GM12878 (cell line): ENCODE measurements at regions of chr17 and their contacts with region 1.

Region 1: GRCh38 chr17:1628856-1629646 is 417 bp upstream of the SLC43A2 start:
- DNase-seq: no peak
- ATAC-seq: peak; percentile 84
- H3K4me3 ChIP-seq: peak overlapping the region; percentile 88
- H3K27ac ChIP-seq: peak overlapping the region; percentile 87
- H3K4me1 ChIP-seq: peaks cover 42% of the 10 kb centered on the region
- H3K27me3 ChIP-seq: no peaks in the 10 kb centered on the region
- CTCF ChIP-seq: peak in 2 of 3 experiments; percentile 30 to 51; a peak in 4 of 6 replicates
- EP300 ChIP-seq: no peak
- POLR2A ChIP-seq: peak; percentile 70
- RAD21 ChIP-seq: peak; percentile 40; the same call in 1 of the 2 replicates

Region 2: GRCh38 chr17:1532836-1533602 is 96.0 kb before region 1 on chr17:
- CTCF ChIA-PET with region 1: interaction called, 14 read pairs
- POLR2A ChIA-PET with region 1: interaction called, 6 read pairs
- RAD21 ChIA-PET with region 1: interaction called, 4 read pairs
- SMC1A ChIA-PET with region 1: interaction called, 4 read pairs
- in situ Hi-C with region 1: no loop called
- intact Hi-C with region 1: no loop called
- DNase-seq: no peak
- ATAC-seq: peak; percentile 86
- H3K4me3 ChIP-seq: no peak overlapping the region
- H3K27ac ChIP-seq: no peak overlapping the region
- H3K4me1 ChIP-seq: no peaks in the 10 kb centered on the region
- H3K27me3 ChIP-seq: no peaks in the 10 kb centered on the region
- CTCF ChIP-seq: peak; percentile 45 to 63 (median 57); a peak in 5 of 6 replicates
- EP300 ChIP-seq: no peak
- POLR2A ChIP-seq: no peak
- RAD21 ChIP-seq: peak; percentile 50

Region 3: DNA sequence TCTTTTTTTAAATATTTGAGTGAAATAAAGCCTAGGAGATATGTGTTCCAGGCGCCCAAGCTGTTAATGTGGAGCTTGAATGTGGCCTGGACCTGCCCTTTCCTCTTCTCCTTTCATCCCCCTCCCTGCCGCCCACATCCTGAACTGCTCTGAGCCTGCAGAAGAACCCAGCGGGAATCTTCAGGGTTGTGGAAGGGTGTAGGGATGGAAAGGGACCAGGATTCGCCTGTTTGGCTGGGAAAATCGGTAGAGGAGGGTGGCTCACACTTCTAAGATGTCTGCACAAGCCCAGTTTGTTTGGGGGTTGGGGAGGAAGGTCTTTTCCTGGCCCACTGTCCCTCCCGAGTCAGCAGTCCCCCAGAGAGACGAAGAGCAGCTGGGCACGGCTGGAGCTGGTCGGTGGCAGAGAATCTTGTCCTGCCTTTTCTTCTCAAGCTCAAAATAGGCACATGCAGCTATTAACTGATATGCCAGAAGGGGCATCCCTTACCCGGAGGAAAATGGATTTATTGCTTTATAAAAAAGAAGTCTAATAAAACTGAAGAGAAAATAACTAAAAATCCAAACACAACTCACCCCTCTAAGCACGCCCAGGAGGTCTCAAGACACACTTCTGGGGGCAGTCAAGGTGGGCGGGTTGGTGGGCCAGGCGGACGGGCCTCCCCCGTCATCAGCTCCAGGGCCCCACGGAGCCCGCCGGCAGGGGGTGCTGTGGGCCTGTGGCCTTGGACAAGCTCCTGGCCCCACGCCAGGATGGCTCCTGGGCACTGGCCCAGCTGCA is 54.9 kb before region 1 on chr17:
- CTCF ChIA-PET with region 1: interaction called, 380 read pairs
- POLR2A ChIA-PET with region 1: interaction called, 46 read pairs
- RAD21 ChIA-PET with region 1: interaction called, 317 read pairs
- SMC1A ChIA-PET with region 1: interaction called, 107 read pairs
- in situ Hi-C with region 1: loop called (anchors 10 kb)
- intact Hi-C with region 1: loop called (anchors 1 kb)
- DNase-seq: no peak
- ATAC-seq: peak; percentile 82
- H3K4me3 ChIP-seq: no peak overlapping the region
- H3K27ac ChIP-seq: no peak overlapping the region
- H3K4me1 ChIP-seq: peaks cover 10% of the 10 kb centered on the region
- H3K27me3 ChIP-seq: no peaks in the 10 kb centered on the region
- CTCF ChIP-seq: peak; percentile 85 to 95 (median 90)
- EP300 ChIP-seq: no peak
- POLR2A ChIP-seq: no peak
- RAD21 ChIP-seq: peak; percentile 92

Region 4: DNA sequence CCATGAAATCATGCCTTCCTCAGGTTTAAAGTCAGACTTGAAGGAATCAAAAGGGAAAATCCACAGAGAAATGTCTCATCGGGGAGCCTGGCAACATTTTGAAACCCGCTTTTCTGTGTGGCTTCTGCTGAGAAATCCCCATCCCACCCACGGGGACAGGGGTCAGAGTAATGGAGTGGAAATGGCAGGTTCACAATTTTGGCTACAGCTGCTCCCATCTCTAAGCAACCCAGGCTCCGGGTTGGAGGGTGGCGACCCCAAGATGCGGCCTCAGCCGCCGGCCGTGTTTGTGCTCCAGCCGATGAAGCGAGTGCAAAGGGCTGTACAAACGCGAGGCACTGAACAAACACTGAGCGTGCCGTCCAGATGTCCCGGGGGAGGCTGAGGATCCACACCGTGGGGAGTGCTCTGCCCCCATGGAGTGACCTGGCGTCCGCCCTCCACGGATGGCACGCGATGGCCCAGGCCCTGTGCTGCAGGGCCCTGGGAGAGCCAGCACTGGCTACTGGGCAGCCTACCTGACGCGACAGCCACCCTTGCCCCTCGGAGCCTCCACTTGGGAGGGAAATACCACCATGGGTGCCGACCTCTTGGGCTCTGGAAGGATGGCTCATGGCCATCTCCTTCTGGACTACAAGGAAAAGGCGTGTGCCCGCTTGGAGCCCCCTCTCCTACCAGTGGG is 22.6 kb before region 1 on chr17:
- CTCF ChIA-PET with region 1: interaction called, 37 read pairs
- POLR2A ChIA-PET with region 1: interaction called, 56 read pairs
- RAD21 ChIA-PET with region 1: interaction called, 86 read pairs
- SMC1A ChIA-PET with region 1: interaction called, 34 read pairs
- in situ Hi-C with region 1: no loop called
- intact Hi-C with region 1: loop called (anchors 2 kb)
- DNase-seq: no peak
- ATAC-seq: peak; percentile 55
- H3K4me3 ChIP-seq: no peak overlapping the region
- H3K27ac ChIP-seq: peak overlapping the region; percentile 85
- H3K4me1 ChIP-seq: peaks cover 32% of the 10 kb centered on the region
- H3K27me3 ChIP-seq: no peaks in the 10 kb centered on the region
- CTCF ChIP-seq: no peak
- EP300 ChIP-seq: peak in 1 of 2 experiments; percentile 17; a peak in 1 of 4 replicates
- POLR2A ChIP-seq: peak; percentile 56; the same call in 1 of the 2 replicates
- RAD21 ChIP-seq: no peak